ENCODE measurements at regions of chr9 and their contacts with region 1.

Region 1: DNA sequence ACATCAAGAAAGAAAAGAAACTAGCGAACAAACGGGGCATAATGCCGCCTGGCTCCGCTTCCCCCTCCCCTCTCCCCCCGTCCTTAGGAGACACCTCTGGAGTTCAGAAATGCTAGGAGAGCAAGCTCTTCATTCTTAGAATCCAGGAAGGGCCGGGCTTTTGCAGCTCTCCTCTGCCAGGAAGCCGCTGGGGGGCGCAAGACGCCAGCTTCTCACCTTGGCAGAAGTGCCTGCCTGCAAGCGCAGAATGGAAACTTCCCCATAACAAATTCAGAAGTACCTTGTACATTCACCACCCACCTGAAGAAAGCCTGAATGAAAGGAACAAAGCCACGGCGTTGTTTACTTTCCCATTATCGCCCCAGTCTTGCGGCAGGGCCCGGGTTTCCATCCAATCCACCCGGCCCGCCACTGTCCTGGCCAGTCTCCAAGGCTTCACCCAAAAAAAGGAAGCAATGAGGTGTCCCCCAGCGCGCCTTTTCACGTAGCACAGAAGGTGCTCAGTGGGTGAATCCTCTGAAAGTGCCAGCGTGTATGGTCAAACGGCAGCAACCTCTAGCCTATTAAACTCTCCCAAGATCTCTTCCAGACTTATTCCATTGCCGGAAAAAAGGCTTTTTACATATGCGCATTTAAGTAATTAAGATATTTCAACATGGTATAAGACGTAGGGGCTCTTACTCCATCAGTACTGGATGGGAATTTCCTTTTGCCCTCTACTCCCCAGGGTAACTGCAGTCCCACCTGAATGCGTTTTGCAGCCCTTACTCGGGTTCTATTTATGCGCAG is 1.6 kb upstream of the GADD45G start:
- DNase-seq: peak; percentile 72
- H3K4me3 ChIP-seq: peak overlapping the region; percentile 1 to 31 (median 19)
- H3K27ac ChIP-seq: no peak overlapping the region
- H3K4me1 ChIP-seq: peaks cover 35% of the 10 kb centered on the region
- H3K27me3 ChIP-seq: peaks cover 2% of the 10 kb centered on the region
- CTCF ChIP-seq: peak; percentile 84 to 95

Region 2: GRCh38 chr9:89542401-89543021 is 60.7 kb before region 1 on chr9:
- CTCF ChIA-PET with region 1: no interaction called
- dilution Hi-C with region 1: no loop called
- in situ Hi-C with region 1: no loop called
- intact Hi-C with region 1: no loop called
- DNase-seq: peak; percentile 59
- H3K4me3 ChIP-seq: no peak overlapping the region
- H3K27ac ChIP-seq: no peak overlapping the region
- H3K4me1 ChIP-seq: peaks cover 3% of the 10 kb centered on the region
- H3K27me3 ChIP-seq: no peaks in the 10 kb centered on the region
- CTCF ChIP-seq: no peak

Region 3: DNA sequence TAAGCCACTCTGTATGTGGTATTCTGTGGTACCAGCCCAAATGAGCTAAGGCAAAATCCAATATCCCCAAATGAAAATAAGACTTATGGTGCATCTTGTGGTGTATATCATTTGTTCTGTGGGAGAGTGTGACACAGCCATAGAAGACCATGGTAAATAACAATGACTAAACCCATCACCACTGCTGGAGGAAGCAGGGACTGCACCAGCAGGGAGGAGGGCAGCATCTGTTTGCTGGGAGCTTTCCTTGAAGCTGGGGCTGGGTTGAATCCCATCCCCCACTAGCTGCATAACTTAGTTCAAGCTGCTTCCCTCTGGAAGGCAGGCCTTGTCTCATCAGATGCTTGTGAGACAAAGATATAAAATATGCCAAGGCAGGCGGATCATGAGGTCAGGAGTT is 15.8 kb after region 1 on chr9:
- CTCF ChIA-PET with region 1: no interaction called
- dilution Hi-C with region 1: no loop called
- in situ Hi-C with region 1: no loop called
- intact Hi-C with region 1: no loop called
- DNase-seq: no peak
- H3K4me3 ChIP-seq: no peak overlapping the region
- H3K27ac ChIP-seq: no peak overlapping the region
- H3K4me1 ChIP-seq: no peaks in the 10 kb centered on the region
- H3K27me3 ChIP-seq: no peaks in the 10 kb centered on the region
- CTCF ChIP-seq: no peak

Region 4: DNA sequence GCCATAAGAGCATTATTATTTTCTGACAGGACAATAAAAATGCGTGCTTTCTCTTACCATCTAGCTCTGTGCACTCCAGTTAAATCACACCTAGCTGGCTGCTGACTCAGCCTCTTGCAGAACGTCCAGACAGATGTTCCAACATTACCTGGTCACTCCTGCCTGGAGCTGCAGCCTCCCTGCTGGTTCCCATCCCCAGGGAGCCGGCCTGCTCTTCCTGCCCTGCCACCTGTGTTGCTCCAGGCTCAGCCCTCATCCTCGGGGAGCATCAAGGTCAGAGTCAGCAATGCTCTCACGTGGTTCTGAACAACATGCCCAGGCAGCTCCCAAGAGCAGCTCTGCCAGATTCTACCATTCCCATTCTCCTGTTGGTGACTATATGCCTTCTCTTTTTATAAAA is 82.9 kb after region 1 on chr9:
- CTCF ChIA-PET with region 1: no interaction called
- dilution Hi-C with region 1: no loop called
- in situ Hi-C with region 1: no loop called
- intact Hi-C with region 1: loop called (anchors 1 kb)
- DNase-seq: peak; percentile 95
- H3K4me3 ChIP-seq: no peak overlapping the region
- H3K27ac ChIP-seq: peak overlapping the region; percentile 41
- H3K4me1 ChIP-seq: peaks cover 17% of the 10 kb centered on the region
- H3K27me3 ChIP-seq: no peaks in the 10 kb centered on the region
- CTCF ChIP-seq: peak in 1 of 2 donors; percentile 17

Region 5: GRCh38 chr9:89797937-89798491 is 194.8 kb after region 1 on chr9:
- CTCF ChIA-PET with region 1: no interaction called
- dilution Hi-C with region 1: no loop called
- in situ Hi-C with region 1: no loop called
- intact Hi-C with region 1: loop called (anchors 10 kb)
- DNase-seq: no peak
- H3K4me3 ChIP-seq: no peak overlapping the region
- H3K27ac ChIP-seq: no peak overlapping the region
- H3K4me1 ChIP-seq: no peaks in the 10 kb centered on the region
- H3K27me3 ChIP-seq: no peaks in the 10 kb centered on the region
- CTCF ChIP-seq: no peak

Region 6: GRCh38 chr9:89978170-89978569 is 375.0 kb after region 1 on chr9:
- CTCF ChIA-PET with region 1: no interaction called
- dilution Hi-C with region 1: no loop called
- in situ Hi-C with region 1: loop called in 1 of 2 experiments (anchors 10 kb)
- intact Hi-C with region 1: no loop called
- DNase-seq: no peak
- H3K4me3 ChIP-seq: no peak overlapping the region
- H3K27ac ChIP-seq: no peak overlapping the region
- H3K4me1 ChIP-seq: no peaks in the 10 kb centered on the region
- H3K27me3 ChIP-seq: no peaks in the 10 kb centered on the region
- CTCF ChIP-seq: peak; percentile 28 to 39

Region 7: GRCh38 chr9:89993678-89994630 is 390.8 kb after region 1 on chr9:
- CTCF ChIA-PET with region 1: no interaction called
- dilution Hi-C with region 1: no loop called
- in situ Hi-C with region 1: no loop called
- intact Hi-C with region 1: loop called (anchors 1 kb)
- DNase-seq: no peak
- H3K4me3 ChIP-seq: no peak overlapping the region
- H3K27ac ChIP-seq: no peak overlapping the region
- H3K4me1 ChIP-seq: no peaks in the 10 kb centered on the region
- H3K27me3 ChIP-seq: no peaks in the 10 kb centered on the region
- CTCF ChIP-seq: no peak

Region 8: DNA sequence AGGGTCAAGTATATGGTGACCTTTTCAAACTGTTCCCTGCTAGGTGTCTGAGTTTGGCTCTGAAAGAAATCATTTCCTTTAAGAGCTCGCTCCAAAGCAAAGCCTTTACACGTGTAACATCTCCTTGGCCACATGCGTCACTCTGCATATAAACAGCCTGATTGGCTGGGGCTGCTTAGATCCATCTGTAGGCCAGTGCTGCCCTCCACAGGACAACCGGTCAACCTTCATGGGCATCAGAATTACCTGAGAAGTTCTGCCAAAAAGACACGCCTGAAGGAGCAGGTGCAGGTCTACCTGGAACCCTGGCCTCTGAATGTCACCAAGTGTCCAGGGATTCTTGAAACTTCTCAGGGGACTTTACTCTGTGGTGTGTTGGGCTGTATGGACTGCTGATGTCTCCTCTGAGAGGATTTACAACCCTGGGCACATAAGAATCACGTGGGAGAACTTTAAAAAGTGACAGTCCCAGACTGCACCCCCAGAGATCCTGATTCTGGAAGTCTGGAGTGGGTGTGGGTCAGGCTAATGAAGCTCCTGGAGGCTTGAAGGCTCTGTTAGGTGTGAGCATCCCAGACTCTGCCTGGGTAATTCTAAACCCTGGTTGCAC is 499.2 kb after region 1 on chr9:
- CTCF ChIA-PET with region 1: interaction called, 9 read pairs
- dilution Hi-C with region 1: loop called (anchors 25 kb)
- in situ Hi-C with region 1: loop called (anchors 5 kb)
- intact Hi-C with region 1: loop called (anchors 1 kb)
- DNase-seq: peak; percentile 80
- H3K4me3 ChIP-seq: no peak overlapping the region
- H3K27ac ChIP-seq: no peak overlapping the region
- H3K4me1 ChIP-seq: no peaks in the 10 kb centered on the region
- H3K27me3 ChIP-seq: no peaks in the 10 kb centered on the region
- CTCF ChIP-seq: peak; percentile 66 to 89

Measured in mammary epithelial cell (primary cell).